GM12878 (cell line): ENCODE measurements at regions of chr5 and their contacts with region 1.

Region 1: GRCh38 chr5:81751009-81751835 is at the start of gene SSBP2:
- DNase-seq: peak; percentile 95
- ATAC-seq: peak; percentile 82
- H3K4me3 ChIP-seq: peak within 1 kb of the TSS; percentile 81
- H3K27ac ChIP-seq: peak within 1 kb of the TSS; percentile 95
- H3K4me1 ChIP-seq: peaks cover 10% of the 10 kb centered on the region
- H3K27me3 ChIP-seq: no peaks in the 10 kb centered on the region
- CTCF ChIP-seq: no peak
- EP300 ChIP-seq: peak; percentile 60 to 99; a peak in 3 of 4 replicates
- POLR2A ChIP-seq: peak; percentile 85
- RAD21 ChIP-seq: peak; percentile 50
- polyA plus RNA-seq, gene SSBP2: 117 to 120 TPM

Region 2: DNA sequence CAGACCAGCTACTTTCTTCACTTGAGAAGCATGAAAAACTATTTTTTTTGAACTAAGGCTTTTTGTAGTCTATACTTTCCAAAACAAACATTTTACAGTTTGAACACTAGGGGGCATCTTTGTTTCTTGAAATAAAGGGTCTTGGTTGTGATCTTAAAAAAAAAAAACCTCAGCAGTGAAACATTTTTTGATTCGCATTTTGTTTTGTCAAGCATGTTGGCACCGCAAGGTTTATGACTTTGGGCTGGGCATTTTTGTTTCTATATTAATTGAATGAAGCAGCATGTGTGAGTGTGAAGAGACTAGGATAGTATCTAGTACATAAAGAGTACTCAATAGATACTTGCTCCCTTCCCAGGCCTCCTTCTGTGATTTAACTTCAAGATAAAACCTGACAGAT is 325.7 kb before region 1 on chr5:
- CTCF ChIA-PET with region 1: no interaction called
- POLR2A ChIA-PET with region 1: no interaction called
- RAD21 ChIA-PET with region 1: no interaction called
- SMC1A ChIA-PET with region 1: interaction called, 3 read pairs
- in situ Hi-C with region 1: no loop called
- intact Hi-C with region 1: loop called (anchors 10 kb)
- DNase-seq: no peak
- ATAC-seq: peak; percentile 84
- H3K4me3 ChIP-seq: no peak overlapping the region
- H3K27ac ChIP-seq: no peak overlapping the region
- H3K4me1 ChIP-seq: no peaks in the 10 kb centered on the region
- H3K27me3 ChIP-seq: no peaks in the 10 kb centered on the region
- CTCF ChIP-seq: peak; percentile 36 to 55 (median 48); a peak in 4 of 6 replicates
- EP300 ChIP-seq: no peak
- POLR2A ChIP-seq: no peak
- RAD21 ChIP-seq: peak; percentile 60

Region 3: GRCh38 chr5:81631124-81631523 is 120.1 kb before region 1 on chr5:
- CTCF ChIA-PET with region 1: no interaction called
- POLR2A ChIA-PET with region 1: no interaction called
- RAD21 ChIA-PET with region 1: no interaction called
- SMC1A ChIA-PET with region 1: no interaction called
- in situ Hi-C with region 1: no loop called
- intact Hi-C with region 1: loop called (anchors 2 kb)
- DNase-seq: peak; percentile 51
- ATAC-seq: peak; percentile 90
- H3K4me3 ChIP-seq: no peak overlapping the region
- H3K27ac ChIP-seq: peak overlapping the region; percentile 35
- H3K4me1 ChIP-seq: peaks cover 26% of the 10 kb centered on the region; the same call in 1 of the 2 replicates
- H3K27me3 ChIP-seq: no peaks in the 10 kb centered on the region
- CTCF ChIP-seq: no peak
- EP300 ChIP-seq: peak; percentile 36 to 53; a peak in 1 of 4 replicates
- POLR2A ChIP-seq: no peak
- RAD21 ChIP-seq: no peak

Region 4: DNA sequence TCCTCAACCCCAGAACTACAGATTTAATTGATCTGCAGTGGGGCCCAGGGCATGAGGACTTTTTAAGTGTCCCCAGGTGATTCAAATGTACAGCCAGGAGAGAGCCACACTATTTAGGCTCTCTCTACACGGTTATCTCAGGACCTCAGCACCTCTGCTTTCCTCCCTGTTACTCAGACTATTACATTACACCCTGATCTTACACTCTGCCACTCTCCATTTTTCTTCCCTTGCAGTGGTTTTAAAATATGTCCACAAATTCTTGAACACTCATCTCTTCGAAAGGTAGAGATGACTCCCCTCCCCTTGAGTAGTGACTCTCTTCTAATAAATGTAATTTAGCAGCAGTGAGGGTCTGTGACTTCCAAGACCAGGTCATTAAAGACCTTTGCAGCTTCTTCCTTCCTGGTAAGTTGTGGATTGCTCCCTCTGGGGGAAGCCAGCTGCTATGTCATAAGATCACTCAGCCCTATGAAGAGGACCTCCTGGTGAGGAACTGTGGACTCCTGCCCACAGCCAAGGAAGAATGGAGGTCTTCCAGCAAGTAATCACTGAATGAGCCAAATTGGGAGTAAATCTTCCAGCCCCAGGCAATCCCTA is 87.2 kb after region 1 on chr5:
- CTCF ChIA-PET with region 1: interaction called, 5 read pairs
- POLR2A ChIA-PET with region 1: no interaction called
- RAD21 ChIA-PET with region 1: interaction called, 10 read pairs
- SMC1A ChIA-PET with region 1: interaction called, 6 read pairs
- in situ Hi-C with region 1: no loop called
- intact Hi-C with region 1: no loop called
- DNase-seq: no peak
- ATAC-seq: peak; percentile 92
- H3K4me3 ChIP-seq: no peak overlapping the region
- H3K27ac ChIP-seq: no peak overlapping the region
- H3K4me1 ChIP-seq: no peaks in the 10 kb centered on the region
- H3K27me3 ChIP-seq: no peaks in the 10 kb centered on the region
- CTCF ChIP-seq: peak; percentile 51 to 61 (median 54)
- EP300 ChIP-seq: no peak
- POLR2A ChIP-seq: no peak
- RAD21 ChIP-seq: peak; percentile 74

Region 5: DNA sequence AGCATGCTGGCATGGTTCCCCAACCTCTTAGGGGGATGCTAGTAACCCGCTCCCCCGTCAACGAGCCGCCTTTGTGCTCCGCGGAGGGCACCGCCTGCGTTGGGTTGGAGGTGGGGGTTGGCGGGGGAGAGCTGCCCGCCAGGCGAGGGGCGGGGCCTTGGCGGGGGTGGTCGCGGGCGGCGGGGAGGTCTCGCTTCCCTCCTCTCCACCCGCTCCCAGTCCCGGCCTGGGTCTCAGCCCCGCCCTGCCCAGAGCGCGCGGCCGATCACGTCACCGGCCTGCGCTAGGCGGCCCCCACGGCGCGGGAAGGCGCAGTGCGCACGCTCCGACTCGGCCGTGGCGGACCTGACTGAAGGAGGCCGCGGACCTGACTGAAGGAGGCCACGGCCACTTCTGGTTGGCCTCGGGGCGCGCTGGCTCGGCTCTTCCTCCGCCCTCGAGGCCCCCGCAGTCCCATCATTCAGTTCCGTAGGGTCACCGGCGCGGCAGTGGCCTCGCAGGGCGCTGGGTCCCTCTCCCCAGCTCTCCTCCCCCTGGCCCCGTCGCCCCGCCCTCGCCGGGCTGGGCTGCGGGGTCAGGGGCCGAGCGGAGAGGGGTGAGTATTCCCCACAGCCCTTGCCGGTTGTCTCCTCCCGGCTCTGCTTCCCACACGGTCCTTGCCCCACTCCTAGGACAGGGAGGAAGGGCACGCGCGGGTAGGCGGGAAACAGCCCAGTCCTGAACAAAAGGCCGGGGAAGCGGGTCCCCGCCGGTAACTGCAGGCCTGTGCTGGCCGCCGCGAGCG is 220.7 kb after region 1 on chr5 and contains the start of gene ATG10:
- CTCF ChIA-PET with region 1: no interaction called
- POLR2A ChIA-PET with region 1: no interaction called
- RAD21 ChIA-PET with region 1: no interaction called
- SMC1A ChIA-PET with region 1: no interaction called
- in situ Hi-C with region 1: no loop called
- intact Hi-C with region 1: loop called (anchors 2 kb)
- DNase-seq: peak; percentile 69
- ATAC-seq: peak; percentile 97
- H3K4me3 ChIP-seq: peak within 1 kb of the TSS; percentile 79
- H3K27ac ChIP-seq: peak within 1 kb of the TSS; percentile 90
- H3K4me1 ChIP-seq: no peaks in the 10 kb centered on the region
- H3K27me3 ChIP-seq: no peaks in the 10 kb centered on the region
- CTCF ChIP-seq: no peak
- EP300 ChIP-seq: no peak
- POLR2A ChIP-seq: peak; percentile 98
- RAD21 ChIP-seq: no peak
- polyA plus RNA-seq, gene ATG10: 7.5 to 9.0 TPM